ENCODE measurements at regions of chr7 and their contacts with region 1.

Region 1: DNA sequence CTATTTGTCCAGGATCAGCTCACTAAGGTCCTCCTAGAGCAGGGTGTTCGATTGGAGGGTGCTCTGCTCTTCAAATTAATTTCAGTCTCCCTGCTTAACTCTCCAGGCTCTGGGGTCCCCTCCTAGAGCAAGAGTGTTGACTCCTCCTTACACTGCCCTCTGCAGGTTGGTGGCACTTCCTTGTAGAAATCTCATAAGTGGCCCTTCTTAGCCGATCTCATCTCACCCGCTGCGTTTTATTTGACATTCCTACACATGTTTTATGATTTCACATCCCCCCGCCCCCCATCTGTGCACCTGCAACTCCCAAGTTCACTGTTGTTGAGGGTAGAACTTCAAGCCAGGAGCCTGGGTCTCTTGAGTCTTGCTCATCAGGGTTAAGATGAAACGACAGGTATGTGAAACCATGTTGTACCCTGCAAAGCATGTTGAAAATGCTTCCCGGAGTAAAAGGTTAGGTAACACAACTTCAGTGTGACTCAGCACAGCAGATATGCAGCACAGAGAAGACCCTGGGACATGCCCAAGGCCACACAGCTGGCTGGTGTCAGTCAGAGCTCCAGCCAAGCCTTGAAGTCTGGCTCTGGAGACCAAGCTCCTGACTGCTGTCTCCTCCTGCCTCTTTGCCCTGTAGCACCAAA is 171.2 kb downstream of the PRKAG2 start:
- DNase-seq: peak; percentile 72 to 84 (median 81)
- H3K4me3 ChIP-seq: no peak overlapping the region
- H3K27ac ChIP-seq: no peak overlapping the region
- H3K4me1 ChIP-seq: peaks cover 0 to 6% (median under 1%) of the 10 kb centered on the region in 4 experiments
- H3K27me3 ChIP-seq: no peaks in the 10 kb centered on the region

Region 2: GRCh38 chr7:151351027-151351426 is 354.7 kb before region 1 on chr7:
- CTCF ChIA-PET with region 1: no interaction called
- POLR2A ChIA-PET with region 1: no interaction called
- DNase-seq: peak; percentile 31 to 38 (median 38)
- H3K4me3 ChIP-seq: no peak overlapping the region
- H3K27ac ChIP-seq: peak overlapping the region in 1 of 2 experiments; percentile 4
- H3K4me1 ChIP-seq: peaks cover 16 to 46% (median 35%) of the 10 kb centered on the region in 4 experiments
- H3K27me3 ChIP-seq: no peaks in the 10 kb centered on the region

Region 3: GRCh38 chr7:151484971-151485707 is 220.6 kb before region 1 on chr7:
- CTCF ChIA-PET with region 1: no interaction called
- POLR2A ChIA-PET with region 1: no interaction called
- DNase-seq: peak in 2 of 3 donors; percentile 53 to 67
- H3K4me3 ChIP-seq: no peak overlapping the region
- H3K27ac ChIP-seq: no peak overlapping the region
- H3K4me1 ChIP-seq: peaks cover 2 to 13% (median 8%) of the 10 kb centered on the region in 4 experiments
- H3K27me3 ChIP-seq: no peaks in the 10 kb centered on the region

Region 4: GRCh38 chr7:151626422-151627115 is 79.2 kb before region 1 on chr7:
- CTCF ChIA-PET with region 1: interaction called, 18 read pairs
- POLR2A ChIA-PET with region 1: interaction called, 3 read pairs
- DNase-seq: peak; percentile 69 to 79 (median 79)
- H3K4me3 ChIP-seq: no peak overlapping the region
- H3K27ac ChIP-seq: no peak overlapping the region
- H3K4me1 ChIP-seq: peaks cover 9 to 12% (median 11%) of the 10 kb centered on the region in 4 experiments
- H3K27me3 ChIP-seq: no peaks in the 10 kb centered on the region

Region 5: DNA sequence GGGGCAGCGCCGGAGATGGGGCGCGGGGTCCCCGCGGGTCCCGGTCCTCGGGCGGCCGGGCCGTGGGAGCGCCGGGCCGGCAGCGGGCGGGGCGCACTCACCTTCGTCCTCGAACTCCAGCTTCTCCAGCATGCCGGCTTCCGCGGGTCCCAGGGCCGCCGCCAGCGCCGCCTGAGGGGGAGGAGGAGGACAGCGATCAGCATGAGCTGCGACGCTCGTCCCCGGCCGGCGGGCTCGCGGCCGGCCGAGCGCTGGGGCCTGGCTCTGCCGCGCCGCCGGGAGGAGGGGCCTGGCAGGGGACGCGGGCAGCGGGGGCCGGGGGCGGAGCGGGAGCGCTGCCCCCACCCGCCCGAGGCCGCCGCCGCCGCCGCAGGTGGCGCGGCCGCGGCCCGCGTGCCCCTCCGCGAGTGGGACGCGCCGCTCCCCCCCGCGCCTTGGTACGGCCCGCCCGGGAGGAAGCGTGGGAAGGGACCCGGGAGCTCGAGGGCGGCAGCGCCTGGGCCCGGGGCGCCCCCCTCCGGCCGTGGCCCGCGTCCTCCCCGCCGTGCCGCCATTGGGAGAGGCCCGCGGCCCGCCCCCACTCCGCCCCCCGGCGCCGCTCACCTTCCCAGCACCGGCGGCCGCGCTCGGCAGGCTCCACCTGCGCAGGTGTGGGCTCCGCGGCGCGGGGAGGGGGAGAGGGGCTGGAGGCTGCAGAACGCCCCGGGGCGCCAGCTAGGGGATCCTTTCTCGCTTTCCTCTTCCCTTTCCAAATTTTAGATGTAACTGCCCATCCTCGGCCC is 73.6 kb before region 1 on chr7:
- CTCF ChIA-PET with region 1: interaction called, 18 read pairs
- POLR2A ChIA-PET with region 1: interaction called, 3 read pairs
- DNase-seq: peak; percentile 86 to 92 (median 91)
- H3K4me3 ChIP-seq: peak overlapping the region; percentile 46 to 99 (median 87)
- H3K27ac ChIP-seq: peak overlapping the region; percentile 48 to 82
- H3K4me1 ChIP-seq: peaks cover 12 to 20% (median 15%) of the 10 kb centered on the region in 4 experiments
- H3K27me3 ChIP-seq: no peaks in the 10 kb centered on the region

Region 6: GRCh38 chr7:151680721-151681209 is 25.0 kb before region 1 on chr7:
- CTCF ChIA-PET with region 1: interaction called, 12 read pairs
- POLR2A ChIA-PET with region 1: interaction called, 4 read pairs
- DNase-seq: no peak
- H3K4me3 ChIP-seq: no peak overlapping the region
- H3K27ac ChIP-seq: no peak overlapping the region
- H3K4me1 ChIP-seq: peaks cover 6 to 54% (median 49%) of the 10 kb centered on the region in 4 experiments
- H3K27me3 ChIP-seq: no peaks in the 10 kb centered on the region

Region 7: GRCh38 chr7:151736403-151736909 is 30.7 kb after region 1 on chr7:
- CTCF ChIA-PET with region 1: interaction called, 13 read pairs
- POLR2A ChIA-PET with region 1: no interaction called
- DNase-seq: peak in 2 of 3 donors; percentile 73 to 74
- H3K4me3 ChIP-seq: peak overlapping the region in 3 of 7 experiments; percentile 10 to 24 (median 14)
- H3K27ac ChIP-seq: no peak overlapping the region
- H3K4me1 ChIP-seq: peaks cover 0 to 15% (median 2%) of the 10 kb centered on the region in 4 experiments
- H3K27me3 ChIP-seq: no peaks in the 10 kb centered on the region

Region 8: GRCh38 chr7:151773756-151774155 is 68.0 kb after region 1 on chr7:
- CTCF ChIA-PET with region 1: no interaction called
- POLR2A ChIA-PET with region 1: no interaction called
- DNase-seq: no peak
- H3K4me3 ChIP-seq: no peak overlapping the region
- H3K27ac ChIP-seq: no peak overlapping the region
- H3K4me1 ChIP-seq: no peaks in the 10 kb centered on the region
- H3K27me3 ChIP-seq: no peaks in the 10 kb centered on the region

Measured in common myeloid progenitor, CD34-positive (primary cell).